Naive thymus-derived CD4-positive, alpha-beta T cell (primary cell): ENCODE measurements at regions of chr7 and their contacts with region 1.

Region 1: DNA sequence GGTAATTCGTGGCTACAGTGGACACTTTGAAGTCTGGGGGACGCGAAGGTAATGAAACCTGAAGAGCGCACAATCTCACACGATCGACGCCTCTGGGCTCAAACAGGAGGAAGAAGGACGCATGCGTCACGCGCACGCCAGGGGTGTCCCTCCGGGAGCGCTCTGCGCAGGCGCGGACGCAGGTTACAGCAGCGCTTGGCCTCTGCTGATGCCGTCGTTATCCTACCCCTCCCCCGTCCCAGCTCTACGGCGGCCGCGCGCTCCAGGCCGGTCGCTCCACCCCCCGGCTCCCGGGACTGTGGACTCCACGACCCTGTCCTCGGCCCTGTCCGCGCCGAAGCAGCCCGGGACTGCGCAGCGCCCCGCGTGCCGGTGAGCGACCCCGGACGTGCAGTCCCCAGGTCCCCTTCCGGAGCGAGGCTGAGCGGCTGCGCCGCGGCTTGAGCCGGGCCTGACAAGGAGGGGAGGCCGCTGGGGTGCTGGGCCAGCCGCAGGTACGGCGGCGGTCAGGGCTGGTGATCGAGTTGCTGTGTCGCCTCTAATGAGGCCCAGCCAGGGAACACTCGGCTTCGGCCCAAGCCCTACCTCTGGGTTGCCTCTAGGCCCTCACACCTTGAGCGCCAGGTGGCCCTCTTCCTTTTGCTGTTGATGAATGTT is at the start of gene TMEM106B:
- DNase-seq: peak; percentile 93 to 97 (median 96)
- ATAC-seq: peak; percentile 94
- H3K4me3 ChIP-seq: peak within 1 kb of the TSS; percentile 78
- H3K4me3 Mint-ChIP-seq: peak within 1 kb of the TSS; percentile 87 to 98 (median 97)
- H3K27ac ChIP-seq: peak within 1 kb of the TSS; percentile 97
- H3K27ac Mint-ChIP-seq: peak within 1 kb of the TSS; percentile 95 to 100 (median 99)
- H3K4me1 ChIP-seq: peaks cover 12 to 22% of the 10 kb centered on the region in 2 donors
- H3K4me1 Mint-ChIP-seq: peaks cover 25 to 56% (median 41%) of the 10 kb centered on the region in 7 donors
- H3K27me3 ChIP-seq: no peaks in the 10 kb centered on the region
- H3K27me3 Mint-ChIP-seq: peaks cover 0 to 35% (median 0%) of the 10 kb centered on the region in 5 donors
- total RNA-seq, gene TMEM106B: 22.8 to 69.2 (median 40.1) TPM

Region 2: DNA sequence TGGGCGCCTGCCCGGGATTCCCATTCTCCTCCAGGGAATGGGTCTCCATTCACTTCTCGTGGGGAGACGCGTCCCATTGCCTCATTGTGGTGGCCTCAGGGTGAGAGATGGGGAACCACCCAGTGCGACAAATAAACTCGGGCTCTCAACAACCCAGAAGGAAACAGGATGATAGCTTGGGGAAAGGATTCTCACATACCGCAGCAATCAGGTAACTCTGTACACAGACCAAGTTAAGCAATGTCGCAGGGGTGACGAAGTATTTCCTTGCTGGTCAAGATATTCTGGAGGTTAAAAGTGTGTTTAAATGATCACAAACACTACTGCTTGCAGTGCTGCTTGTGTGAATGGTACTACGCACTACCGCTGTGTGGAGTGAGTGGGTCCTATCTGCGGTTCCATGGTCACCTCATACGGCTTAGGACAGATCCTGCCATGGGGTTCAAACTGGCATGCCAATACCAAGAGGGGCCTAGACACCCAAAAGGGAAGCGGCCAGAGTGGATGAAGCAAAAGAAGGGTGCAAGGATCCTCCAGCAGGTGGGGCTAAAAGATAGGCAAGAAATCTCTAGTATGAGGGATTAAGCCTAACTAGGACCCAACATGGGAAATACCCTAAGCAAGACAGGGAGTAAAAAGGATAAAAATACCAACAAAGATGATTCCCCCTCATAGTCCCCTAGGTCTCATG is 143.9 kb before region 1 on chr7:
- CTCF ChIA-PET with region 1: interaction called, 5 read pairs
- POLR2A ChIA-PET with region 1: interaction called, 5 read pairs
- intact Hi-C with region 1: loop called (anchors 1 to 2 kb)
- DNase-seq: peak; percentile 15 to 69 (median 58)
- ATAC-seq: peak; percentile 72
- H3K4me3 ChIP-seq: no peak overlapping the region
- H3K4me3 Mint-ChIP-seq: no peak overlapping the region
- H3K27ac ChIP-seq: no peak overlapping the region
- H3K27ac Mint-ChIP-seq: peak overlapping the region in 1 of 9 donors; percentile 73
- H3K4me1 ChIP-seq: no peaks in the 10 kb centered on the region
- H3K4me1 Mint-ChIP-seq: peaks cover 0 to 5% (median 0%) of the 10 kb centered on the region in 7 donors
- H3K27me3 ChIP-seq: no peaks in the 10 kb centered on the region
- H3K27me3 Mint-ChIP-seq: no peaks in the 10 kb centered on the region

Region 3: DNA sequence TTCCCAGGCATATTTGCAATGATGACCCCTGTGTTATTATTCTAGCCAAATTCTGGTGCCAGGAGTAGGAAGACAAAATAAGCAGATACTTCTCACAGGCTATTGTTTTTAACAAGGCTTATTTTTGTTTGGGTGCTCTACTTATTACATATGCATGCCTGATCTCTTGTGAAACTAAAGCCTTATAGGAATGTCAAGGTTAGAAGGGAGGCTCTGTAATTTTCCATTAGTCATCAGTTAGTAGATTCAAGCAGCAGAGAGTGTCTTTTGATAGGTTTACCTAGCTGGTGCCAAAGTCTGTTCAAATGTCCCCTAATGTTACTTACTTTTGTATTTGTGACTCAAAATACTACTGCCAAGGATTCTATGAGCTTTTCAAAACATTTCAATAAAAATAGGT is 11.8 kb before region 1 on chr7:
- CTCF ChIA-PET with region 1: no interaction called
- POLR2A ChIA-PET with region 1: interaction called, 10 read pairs
- intact Hi-C with region 1: no loop called
- DNase-seq: no peak
- ATAC-seq: no peak
- H3K4me3 ChIP-seq: no peak overlapping the region
- H3K4me3 Mint-ChIP-seq: no peak overlapping the region
- H3K27ac ChIP-seq: no peak overlapping the region
- H3K27ac Mint-ChIP-seq: no peak overlapping the region
- H3K4me1 ChIP-seq: no peaks in the 10 kb centered on the region
- H3K4me1 Mint-ChIP-seq: no peaks in the 10 kb centered on the region
- H3K27me3 ChIP-seq: no peaks in the 10 kb centered on the region
- H3K27me3 Mint-ChIP-seq: peaks cover 0 to 29% (median 0%) of the 10 kb centered on the region in 5 donors

Region 4: GRCh38 chr7:12291870-12292269 is 80.7 kb after region 1 on chr7:
- CTCF ChIA-PET with region 1: no interaction called
- POLR2A ChIA-PET with region 1: interaction called, 3 read pairs
- intact Hi-C with region 1: loop called (anchors 1 kb)
- DNase-seq: no peak
- ATAC-seq: peak; percentile 37
- H3K4me3 ChIP-seq: no peak overlapping the region
- H3K4me3 Mint-ChIP-seq: no peak overlapping the region
- H3K27ac ChIP-seq: no peak overlapping the region
- H3K27ac Mint-ChIP-seq: no peak overlapping the region
- H3K4me1 ChIP-seq: no peaks in the 10 kb centered on the region
- H3K4me1 Mint-ChIP-seq: peaks cover 0 to 10% (median 0%) of the 10 kb centered on the region in 7 donors
- H3K27me3 ChIP-seq: no peaks in the 10 kb centered on the region
- H3K27me3 Mint-ChIP-seq: peaks cover 0 to 7% (median 0%) of the 10 kb centered on the region in 5 donors

Region 5: DNA sequence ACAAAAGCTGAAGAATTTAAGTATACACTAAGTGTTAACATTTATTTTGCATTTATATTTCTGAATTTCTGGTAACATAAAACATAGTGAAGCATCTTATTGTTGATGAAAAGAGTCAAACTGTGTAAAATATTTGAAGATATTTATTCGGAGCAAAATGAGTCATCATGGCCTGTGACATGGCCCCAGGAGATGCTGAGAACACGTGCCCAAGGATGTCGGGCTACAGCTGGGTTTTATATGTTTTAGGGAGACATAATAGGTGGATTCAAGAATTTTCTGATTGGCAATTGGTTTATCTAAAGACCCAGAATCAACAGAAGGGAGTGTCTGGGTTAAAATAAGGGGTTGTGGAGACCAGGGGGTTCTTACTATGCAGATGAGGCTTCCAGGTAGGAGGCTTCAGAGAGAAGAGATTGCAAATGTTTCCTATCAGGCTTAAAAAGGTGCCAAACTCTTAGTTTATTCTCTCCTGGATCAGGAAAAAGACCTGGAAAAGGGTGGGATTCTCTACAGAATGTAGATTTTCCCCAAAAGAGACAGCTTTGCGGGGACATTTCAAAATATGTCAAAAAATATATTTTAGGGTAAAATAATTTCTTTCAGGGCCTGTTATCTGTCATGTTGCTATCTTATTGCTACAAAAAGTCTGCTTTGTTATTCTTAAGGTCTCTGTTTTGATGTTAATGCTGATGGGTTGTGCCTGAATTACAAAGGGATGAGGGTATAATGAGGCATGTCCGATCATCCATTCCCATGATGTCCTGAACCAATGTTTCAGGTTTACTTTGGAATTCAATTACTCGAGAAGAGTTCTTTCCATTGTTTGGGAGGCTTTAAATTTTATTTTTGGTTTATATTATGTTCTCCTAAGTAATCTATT is 117.9 kb after region 1 on chr7:
- CTCF ChIA-PET with region 1: no interaction called
- POLR2A ChIA-PET with region 1: no interaction called
- intact Hi-C with region 1: no loop called
- DNase-seq: no peak
- ATAC-seq: no peak
- H3K4me3 ChIP-seq: no peak overlapping the region
- H3K4me3 Mint-ChIP-seq: no peak overlapping the region
- H3K27ac ChIP-seq: no peak overlapping the region
- H3K27ac Mint-ChIP-seq: peak overlapping the region in 1 of 9 donors; percentile 43
- H3K4me1 ChIP-seq: no peaks in the 10 kb centered on the region
- H3K4me1 Mint-ChIP-seq: no peaks in the 10 kb centered on the region
- H3K27me3 ChIP-seq: no peaks in the 10 kb centered on the region
- H3K27me3 Mint-ChIP-seq: peaks cover 0 to 4% (median 0%) of the 10 kb centered on the region in 5 donors

Region 6: DNA sequence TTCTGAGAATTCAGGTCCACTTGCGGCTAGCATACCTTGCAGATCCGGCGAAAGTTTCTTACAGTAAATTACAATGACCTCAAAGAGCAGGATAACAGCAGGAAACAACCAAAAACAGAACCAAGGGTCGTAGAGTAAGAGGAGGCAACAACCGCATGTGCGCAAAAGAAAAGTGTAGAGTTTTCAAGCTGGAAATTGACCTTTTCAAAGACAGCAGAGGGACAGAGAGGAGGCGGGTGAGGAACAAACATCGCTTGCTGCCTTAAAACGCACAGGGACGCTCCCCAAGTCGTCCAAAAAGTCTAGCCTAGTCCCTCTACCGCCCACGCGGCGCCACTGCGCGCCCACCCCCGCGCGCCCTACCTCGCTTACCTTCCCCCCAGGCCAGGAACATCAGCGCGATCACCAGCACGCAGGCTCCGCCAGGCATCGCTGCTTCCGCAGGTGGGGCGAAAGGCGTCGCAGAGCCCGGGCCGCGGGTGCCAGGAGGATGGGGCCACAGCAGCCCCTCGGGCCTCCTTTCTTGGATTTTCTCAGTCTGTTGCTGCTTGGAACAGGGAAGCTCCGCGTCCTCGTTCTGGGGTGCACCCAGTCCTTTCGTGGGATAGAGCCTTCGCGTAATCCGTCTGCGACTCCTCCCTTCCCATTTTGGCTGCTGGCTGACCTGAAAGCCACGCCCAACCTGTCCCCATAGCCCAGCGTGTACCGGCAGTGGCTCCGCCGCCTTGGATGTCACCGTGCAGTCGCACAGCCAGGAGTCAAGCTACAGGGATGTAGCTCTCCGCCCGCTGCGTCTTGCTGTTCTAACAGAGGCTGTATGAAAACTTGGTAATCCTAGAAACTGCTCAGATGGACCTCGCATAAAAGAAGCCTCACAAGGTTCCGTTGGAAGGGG is 192.4 kb after region 1 on chr7 and contains the start of gene VWDE:
- CTCF ChIA-PET with region 1: no interaction called
- POLR2A ChIA-PET with region 1: no interaction called
- intact Hi-C with region 1: loop called (anchors 1 to 2 kb)
- DNase-seq: peak; percentile 3 to 74 (median 29)
- ATAC-seq: peak; percentile 89
- H3K4me3 ChIP-seq: peak within 1 kb of the TSS; percentile 62
- H3K4me3 Mint-ChIP-seq: peak within 1 kb of the TSS; percentile 80 to 96 (median 88)
- H3K27ac ChIP-seq: peak within 1 kb of the TSS; percentile 38
- H3K27ac Mint-ChIP-seq: peak within 1 kb of the TSS in 6 of 9 donors; percentile 14 to 89 (median 82)
- H3K4me1 ChIP-seq: no peaks in the 10 kb centered on the region
- H3K4me1 Mint-ChIP-seq: peaks cover 11 to 20% (median 16%) of the 10 kb centered on the region in 7 donors
- H3K27me3 ChIP-seq: no peaks in the 10 kb centered on the region
- H3K27me3 Mint-ChIP-seq: peaks cover 14 to 44% (median 25%) of the 10 kb centered on the region in 5 donors
- total RNA-seq, gene VWDE: 1.3 to 4.9 (median 3.9) TPM